ENCODE measurements at regions of chr1 and their contacts with region 1.

Region 1: DNA sequence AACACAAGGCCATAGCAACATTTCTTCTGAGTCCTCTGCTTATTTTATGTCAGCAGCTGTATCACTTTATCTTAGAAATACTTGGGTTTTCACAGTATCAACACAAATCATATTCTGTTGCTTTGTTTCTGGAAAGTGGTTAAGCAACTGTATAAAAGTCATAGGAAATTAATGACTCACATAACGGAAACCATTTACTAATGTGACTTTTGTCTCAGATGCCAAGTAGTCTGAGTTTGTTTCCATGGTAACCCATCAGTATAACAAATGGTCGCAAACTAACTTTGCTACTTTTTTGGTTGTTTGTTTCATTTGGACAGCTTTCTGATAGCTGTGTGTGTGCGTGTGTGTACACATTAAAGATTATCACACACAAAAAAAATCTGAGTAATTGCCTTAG is 31.1 kb downstream of the EEIG2 start:
- DNase-seq: no peak
- H3K4me3 Mint-ChIP-seq: no peak overlapping the region
- H3K27ac Mint-ChIP-seq: no peak overlapping the region
- H3K4me1 Mint-ChIP-seq: peaks cover 33% of the 10 kb centered on the region
- H3K27me3 Mint-ChIP-seq: no peaks in the 10 kb centered on the region

Region 2: DNA sequence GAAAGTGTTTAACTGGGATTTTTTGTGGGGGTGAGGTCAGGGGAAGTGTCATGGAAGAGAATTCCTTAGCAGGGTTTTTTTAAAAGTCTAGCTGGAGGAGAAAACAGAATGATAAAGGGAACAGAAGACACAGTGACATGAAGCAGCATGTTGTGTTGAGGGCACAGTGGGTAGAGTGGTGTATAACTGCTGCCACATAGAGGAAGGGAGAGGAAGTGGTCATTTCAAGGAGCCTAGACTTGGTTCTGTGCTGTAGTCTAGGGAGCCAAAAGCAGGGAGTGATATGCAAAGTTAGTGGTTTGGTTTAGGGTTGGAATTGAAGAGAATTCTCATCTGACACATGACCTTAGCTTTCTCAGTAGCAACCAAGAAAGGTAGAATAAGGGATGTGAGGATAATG is 20.8 kb before region 1 on chr1:
- CTCF ChIA-PET with region 1: interaction called, 8 read pairs
- intact Hi-C with region 1: loop called (anchors 2 kb)
- DNase-seq: peak; percentile 41
- H3K4me3 Mint-ChIP-seq: no peak overlapping the region
- H3K27ac Mint-ChIP-seq: no peak overlapping the region
- H3K4me1 Mint-ChIP-seq: no peaks in the 10 kb centered on the region
- H3K27me3 Mint-ChIP-seq: no peaks in the 10 kb centered on the region

Region 3: GRCh38 chr1:108746372-108747205 is 155.6 kb after region 1 on chr1 and contains the start of gene STXBP3:
- CTCF ChIA-PET with region 1: no interaction called
- intact Hi-C with region 1: no loop called
- DNase-seq: peak; percentile 100
- H3K4me3 Mint-ChIP-seq: peak within 1 kb of the TSS; percentile 94
- H3K27ac Mint-ChIP-seq: peak within 1 kb of the TSS; percentile 92
- H3K4me1 Mint-ChIP-seq: peaks cover 28% of the 10 kb centered on the region
- H3K27me3 Mint-ChIP-seq: no peaks in the 10 kb centered on the region
- total RNA-seq, gene STXBP3: 29.1 to 30.3 TPM

Measured in activated naive CD4-positive, alpha-beta T cell treated with anti-CD3 and anti-CD28 coated beads for 36 hours (primary cell).